Sigmoid colon (tissue), 7 donors: ENCODE measurements at regions of chr11 and their contacts with region 1.

Region 1: GRCh38 chr11:78798660-78799059 is 224.0 kb upstream of the NARS2 start:
- DNase-seq: peak; percentile 88
- H3K4me3 ChIP-seq: no peak overlapping the region
- H3K27ac ChIP-seq: peak overlapping the region in 2 of 4 donors; percentile 18 to 34
- H3K4me1 ChIP-seq: peaks cover 0 to 49% (median 45%) of the 10 kb centered on the region in 4 donors
- H3K27me3 ChIP-seq: no peaks in the 10 kb centered on the region
- CTCF ChIP-seq: peak; percentile 70 to 82 (median 73)
- EP300 ChIP-seq: no peak
- POLR2A ChIP-seq: no peak

Region 2: DNA sequence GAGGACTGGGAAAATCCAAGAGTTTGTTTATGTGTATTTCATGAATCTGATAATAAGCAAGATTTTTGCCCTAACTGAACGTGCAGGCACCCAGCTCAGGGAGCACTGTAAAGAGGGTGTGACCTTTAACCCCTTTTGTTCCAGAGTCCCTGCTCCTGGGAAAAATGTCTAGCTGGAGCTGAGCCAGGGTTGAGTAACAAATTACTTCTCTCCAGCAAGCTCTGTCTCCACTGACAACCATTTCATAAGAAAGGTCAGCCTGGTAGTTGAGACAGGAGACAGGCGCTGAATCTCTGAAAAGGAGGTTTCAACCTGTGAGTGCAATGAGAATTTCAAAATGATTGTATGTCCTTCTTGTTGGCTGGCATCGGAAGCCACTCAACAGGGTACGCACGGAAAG is 67.6 kb before region 1 on chr11:
- intact Hi-C with region 1: no loop called
- DNase-seq: no peak
- H3K4me3 ChIP-seq: no peak overlapping the region
- H3K27ac ChIP-seq: no peak overlapping the region
- H3K4me1 ChIP-seq: no peaks in the 10 kb centered on the region
- H3K27me3 ChIP-seq: no peaks in the 10 kb centered on the region
- CTCF ChIP-seq: no peak
- EP300 ChIP-seq: no peak
- POLR2A ChIP-seq: no peak

Region 3: DNA sequence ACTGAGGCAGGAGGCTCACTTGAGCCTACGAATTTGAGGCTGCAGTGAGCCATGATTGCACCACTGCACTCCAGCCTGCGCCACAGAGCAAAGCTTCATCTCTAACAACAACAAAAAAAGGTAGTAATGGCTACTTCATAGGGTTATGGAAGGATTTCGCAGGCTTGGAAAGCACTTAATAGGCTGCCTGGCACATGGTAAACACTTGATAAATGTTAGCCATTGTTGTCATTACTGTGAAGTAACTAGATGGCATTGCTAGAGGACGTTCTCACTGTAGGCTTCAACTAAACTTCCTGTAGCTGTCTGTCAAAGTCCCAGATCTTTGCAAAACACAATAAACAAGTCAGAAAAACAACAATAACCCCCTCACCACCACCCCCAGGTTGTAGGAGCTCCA is 133.2 kb after region 1 on chr11:
- intact Hi-C with region 1: loop called (anchors 5 kb)
- DNase-seq: no peak
- H3K4me3 ChIP-seq: no peak overlapping the region
- H3K27ac ChIP-seq: peak overlapping the region in 3 of 4 donors; percentile 56 to 75 (median 63)
- H3K4me1 ChIP-seq: peaks cover 0 to 46% (median 37%) of the 10 kb centered on the region in 4 donors
- H3K27me3 ChIP-seq: no peaks in the 10 kb centered on the region
- CTCF ChIP-seq: no peak
- EP300 ChIP-seq: no peak
- POLR2A ChIP-seq: no peak

Region 4: DNA sequence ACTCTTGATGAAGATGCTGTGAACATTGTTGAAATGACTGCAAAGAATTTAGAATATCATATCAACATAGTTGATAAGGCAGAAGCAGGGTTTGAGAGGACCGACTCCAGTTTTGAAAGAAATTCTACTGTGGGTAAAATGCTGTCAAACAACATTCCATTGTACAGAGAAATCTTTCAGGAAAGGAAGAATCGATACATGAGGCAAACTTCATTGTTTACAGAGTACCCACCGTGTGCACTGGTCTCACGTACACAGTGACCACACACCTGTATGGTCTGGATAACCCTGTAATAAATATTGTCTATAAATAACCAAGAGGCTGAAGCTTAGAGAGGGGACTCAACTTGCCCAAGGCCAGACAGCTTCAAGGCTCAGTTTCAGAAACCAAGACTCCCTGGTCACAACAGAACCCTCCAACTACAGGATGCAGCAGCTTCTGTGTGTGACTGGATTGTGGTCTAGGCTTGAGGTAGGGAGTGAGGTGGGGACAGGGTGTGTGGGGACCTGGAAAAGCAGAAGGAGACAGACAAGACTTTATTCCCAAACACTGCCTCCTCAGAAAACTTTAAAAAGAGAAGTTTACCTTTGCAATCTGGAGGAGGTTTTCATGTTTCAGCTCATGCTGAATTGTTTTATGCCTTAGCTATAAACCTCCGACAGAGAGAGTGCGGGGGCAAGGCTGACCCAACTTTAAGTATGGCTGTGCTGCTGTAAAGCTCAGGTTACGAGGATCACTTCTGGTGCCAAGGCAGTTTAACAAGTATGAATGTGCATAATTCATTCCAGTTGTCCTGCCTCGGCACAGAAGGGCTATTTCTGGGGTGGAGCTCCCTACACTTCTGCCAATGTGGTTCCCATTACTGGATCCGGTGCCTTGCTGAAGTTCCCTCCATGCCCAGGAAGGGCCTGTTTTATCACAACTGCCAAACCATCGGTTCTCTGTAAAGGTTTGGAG is 148.6 kb after region 1 on chr11:
- intact Hi-C with region 1: loop called (anchors 5 kb)
- DNase-seq: peak; percentile 76
- H3K4me3 ChIP-seq: no peak overlapping the region
- H3K27ac ChIP-seq: peak overlapping the region in 2 of 4 donors; percentile 7 to 55
- H3K4me1 ChIP-seq: peaks cover 0 to 18% (median 13%) of the 10 kb centered on the region in 4 donors
- H3K27me3 ChIP-seq: no peaks in the 10 kb centered on the region
- CTCF ChIP-seq: no peak
- EP300 ChIP-seq: no peak
- POLR2A ChIP-seq: no peak

Region 5: GRCh38 chr11:79076526-79077115 is 278.0 kb after region 1 on chr11:
- intact Hi-C with region 1: loop called (anchors 5 kb)
- DNase-seq: no peak
- H3K4me3 ChIP-seq: no peak overlapping the region
- H3K27ac ChIP-seq: no peak overlapping the region
- H3K4me1 ChIP-seq: peaks cover 3 to 29% (median 25%) of the 10 kb centered on the region in 4 donors
- H3K27me3 ChIP-seq: no peaks in the 10 kb centered on the region
- CTCF ChIP-seq: peak; percentile 15 to 60 (median 44)
- EP300 ChIP-seq: no peak
- POLR2A ChIP-seq: no peak

Region 6: GRCh38 chr11:79092791-79093353 is 294.2 kb after region 1 on chr11:
- intact Hi-C with region 1: loop called (anchors 5 kb)
- DNase-seq: peak; percentile 75
- H3K4me3 ChIP-seq: no peak overlapping the region
- H3K27ac ChIP-seq: peak overlapping the region in 1 of 4 donors; percentile 54
- H3K4me1 ChIP-seq: peaks cover 0 to 17% (median 13%) of the 10 kb centered on the region in 4 donors
- H3K27me3 ChIP-seq: no peaks in the 10 kb centered on the region
- CTCF ChIP-seq: no peak
- EP300 ChIP-seq: no peak
- POLR2A ChIP-seq: no peak